ENCODE measurements at regions of chr15 and their contacts with region 1.

Region 1: DNA sequence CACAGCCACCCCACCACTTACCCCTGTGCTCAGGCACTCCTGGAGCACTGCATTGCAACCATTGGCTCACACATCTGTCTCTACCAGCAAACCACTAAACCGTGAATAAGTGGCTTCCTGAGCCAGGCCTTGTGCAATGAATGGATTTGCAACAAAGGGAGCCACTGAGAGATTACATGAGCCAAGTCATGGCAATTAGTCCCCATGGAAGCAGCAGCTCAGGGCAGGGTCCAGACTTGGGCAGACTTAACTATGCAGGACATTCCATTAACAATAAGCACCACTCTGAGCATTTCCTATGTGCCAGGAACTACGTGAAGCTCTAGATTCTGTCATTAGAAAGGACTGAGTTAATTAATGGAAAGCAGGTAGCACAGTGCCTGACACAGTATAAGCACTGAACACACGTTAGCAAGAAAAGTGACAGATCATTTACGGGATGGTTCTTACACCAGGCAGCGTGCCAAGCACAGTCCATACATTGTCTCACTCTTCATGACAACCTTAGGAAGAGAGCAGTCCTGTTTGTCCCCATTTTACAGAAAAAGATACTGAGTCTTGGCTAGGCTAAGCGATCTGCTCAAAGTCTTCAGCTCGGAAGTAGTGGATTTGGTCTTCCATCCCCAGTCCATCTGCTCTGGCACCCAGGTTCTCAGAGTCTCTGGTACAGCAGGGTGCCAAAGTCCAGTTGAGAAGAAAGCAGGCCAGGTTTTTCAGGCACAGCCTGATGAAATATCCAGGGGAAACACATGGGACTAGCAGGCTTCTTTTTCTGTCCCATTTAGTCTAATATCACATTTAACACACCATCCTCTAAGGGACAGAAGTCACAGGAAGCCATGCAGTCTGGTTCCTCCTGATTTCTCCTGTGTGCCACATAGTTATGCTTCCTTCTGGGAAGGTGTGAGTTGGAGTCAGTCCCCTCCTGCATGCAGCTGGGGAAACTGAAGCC is 44.1 kb downstream of the LIPC start:
- DNase-seq: no peak
- ATAC-seq: peak; percentile 35
- H3K4me3 Mint-ChIP-seq: peak overlapping the region; percentile 76
- H3K27ac Mint-ChIP-seq: peak overlapping the region; percentile 94
- H3K4me1 Mint-ChIP-seq: peaks cover 68% of the 10 kb centered on the region
- H3K27me3 Mint-ChIP-seq: no peaks in the 10 kb centered on the region

Region 2: GRCh38 chr15:58269455-58270414 is 206.1 kb before region 1 on chr15:
- POLR2A ChIA-PET with region 1: interaction called, 20 read pairs
- DNase-seq: peak; percentile 41
- ATAC-seq: peak; percentile 90
- H3K4me3 Mint-ChIP-seq: no peak overlapping the region
- H3K27ac Mint-ChIP-seq: peak overlapping the region; percentile 79
- H3K4me1 Mint-ChIP-seq: peaks cover 10% of the 10 kb centered on the region
- H3K27me3 Mint-ChIP-seq: peaks cover 3% of the 10 kb centered on the region

Region 3: DNA sequence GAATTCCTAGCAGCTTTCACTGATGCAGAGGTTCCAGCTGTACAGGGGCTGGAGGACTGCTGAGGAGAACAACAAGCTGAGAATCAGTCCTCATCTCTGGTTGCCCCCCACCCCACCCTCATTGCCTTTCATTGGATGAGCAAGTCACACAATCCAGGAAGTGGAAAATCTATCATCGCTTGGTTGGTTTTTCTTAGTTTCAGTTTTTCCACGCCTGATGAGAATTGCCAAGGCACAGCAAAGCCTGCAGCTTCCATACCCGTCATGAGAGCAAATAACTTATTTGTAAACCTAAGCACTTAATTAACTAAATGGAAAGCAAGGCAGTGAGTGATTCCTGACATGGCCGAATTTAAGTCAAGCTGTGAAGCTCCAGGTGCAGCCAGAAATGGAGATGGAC is 65.5 kb before region 1 on chr15:
- POLR2A ChIA-PET with region 1: interaction called, 18 read pairs
- DNase-seq: peak; percentile 39
- ATAC-seq: peak; percentile 76
- H3K4me3 Mint-ChIP-seq: peak overlapping the region; percentile 89
- H3K27ac Mint-ChIP-seq: peak overlapping the region; percentile 88
- H3K4me1 Mint-ChIP-seq: peaks cover 20% of the 10 kb centered on the region
- H3K27me3 Mint-ChIP-seq: no peaks in the 10 kb centered on the region

Region 4: DNA sequence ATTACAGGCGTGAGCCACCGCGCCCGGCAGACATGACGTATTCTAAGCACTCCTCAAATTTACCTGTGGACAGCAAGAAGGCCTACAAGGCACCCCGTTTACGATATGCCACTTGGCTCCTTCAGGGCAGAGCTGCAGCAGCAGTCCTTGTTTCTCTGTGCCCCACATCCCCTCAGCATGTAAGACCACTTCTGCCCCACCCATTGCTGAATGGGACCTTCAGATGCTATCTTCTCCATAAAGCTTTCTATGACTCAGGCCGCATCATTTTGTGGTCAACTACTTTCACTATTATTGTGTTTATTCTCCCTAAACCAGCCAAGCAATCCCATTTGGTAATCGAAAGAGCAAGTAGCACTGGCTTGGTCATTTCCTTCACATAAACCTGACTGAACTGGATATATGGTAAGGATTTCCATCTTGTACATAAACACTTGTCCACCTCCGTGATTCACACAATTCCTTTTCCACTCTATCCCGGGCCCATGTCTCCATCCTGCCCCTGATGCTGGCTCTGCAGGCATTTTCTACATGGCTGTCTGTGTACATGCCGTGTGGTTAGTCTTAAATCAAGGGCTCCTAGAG is 18.4 kb before region 1 on chr15:
- POLR2A ChIA-PET with region 1: interaction called, 51 read pairs
- DNase-seq: no peak
- ATAC-seq: peak; percentile 49
- H3K4me3 Mint-ChIP-seq: peak overlapping the region; percentile 28
- H3K27ac Mint-ChIP-seq: peak overlapping the region; percentile 89
- H3K4me1 Mint-ChIP-seq: peaks cover 67% of the 10 kb centered on the region
- H3K27me3 Mint-ChIP-seq: no peaks in the 10 kb centered on the region

Region 5: DNA sequence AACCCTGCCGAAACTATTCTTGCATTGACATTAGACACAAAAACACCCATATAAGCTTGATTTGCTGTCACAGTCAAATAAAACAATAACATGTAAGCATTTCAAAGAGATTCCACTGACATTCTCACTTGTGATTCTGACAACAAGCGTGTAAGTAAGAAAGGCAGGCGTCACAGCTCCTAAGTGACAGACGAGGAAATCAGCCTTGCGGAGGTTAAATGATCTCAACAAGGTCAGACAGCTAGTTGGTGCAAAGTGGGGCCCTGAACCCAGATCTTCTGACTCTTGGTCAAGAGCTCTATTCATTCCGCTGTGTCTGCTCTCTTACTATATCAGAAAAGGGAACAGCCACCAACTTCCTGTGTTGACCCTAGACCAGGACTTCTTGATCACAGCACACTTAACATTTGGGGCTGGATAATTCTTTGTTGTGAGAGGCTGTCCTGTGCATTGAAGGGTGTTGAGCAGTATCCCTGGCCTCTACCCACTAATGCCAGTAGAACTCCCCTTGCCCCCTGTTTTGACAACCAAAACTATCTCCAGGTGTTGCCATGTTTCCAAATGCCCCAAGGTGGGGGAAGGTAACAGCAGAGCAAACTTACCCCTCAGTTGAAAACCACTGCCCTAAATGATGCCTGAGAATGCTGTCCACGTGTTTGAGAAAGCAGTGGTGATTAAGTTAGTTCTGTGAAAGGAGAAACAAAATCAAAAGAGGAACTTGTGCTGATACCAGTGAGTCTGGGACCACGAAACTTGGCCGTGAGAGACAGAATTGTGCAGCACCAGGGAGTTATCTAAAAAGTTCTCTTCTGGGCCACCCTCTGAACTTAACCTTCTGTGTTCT is 42.1 kb after region 1 on chr15:
- POLR2A ChIA-PET with region 1: interaction called, 34 read pairs
- DNase-seq: no peak
- ATAC-seq: peak; percentile 30
- H3K4me3 Mint-ChIP-seq: peak overlapping the region; percentile 59
- H3K27ac Mint-ChIP-seq: peak overlapping the region; percentile 90
- H3K4me1 Mint-ChIP-seq: peaks cover 64% of the 10 kb centered on the region
- H3K27me3 Mint-ChIP-seq: no peaks in the 10 kb centered on the region

Region 6: GRCh38 chr15:58546635-58547627 is 71.1 kb after region 1 on chr15:
- POLR2A ChIA-PET with region 1: interaction called, 11 read pairs
- DNase-seq: no peak
- ATAC-seq: no peak
- H3K4me3 Mint-ChIP-seq: peak overlapping the region; percentile 20
- H3K27ac Mint-ChIP-seq: peak overlapping the region; percentile 98
- H3K4me1 Mint-ChIP-seq: peaks cover 46% of the 10 kb centered on the region
- H3K27me3 Mint-ChIP-seq: no peaks in the 10 kb centered on the region

Region 7: DNA sequence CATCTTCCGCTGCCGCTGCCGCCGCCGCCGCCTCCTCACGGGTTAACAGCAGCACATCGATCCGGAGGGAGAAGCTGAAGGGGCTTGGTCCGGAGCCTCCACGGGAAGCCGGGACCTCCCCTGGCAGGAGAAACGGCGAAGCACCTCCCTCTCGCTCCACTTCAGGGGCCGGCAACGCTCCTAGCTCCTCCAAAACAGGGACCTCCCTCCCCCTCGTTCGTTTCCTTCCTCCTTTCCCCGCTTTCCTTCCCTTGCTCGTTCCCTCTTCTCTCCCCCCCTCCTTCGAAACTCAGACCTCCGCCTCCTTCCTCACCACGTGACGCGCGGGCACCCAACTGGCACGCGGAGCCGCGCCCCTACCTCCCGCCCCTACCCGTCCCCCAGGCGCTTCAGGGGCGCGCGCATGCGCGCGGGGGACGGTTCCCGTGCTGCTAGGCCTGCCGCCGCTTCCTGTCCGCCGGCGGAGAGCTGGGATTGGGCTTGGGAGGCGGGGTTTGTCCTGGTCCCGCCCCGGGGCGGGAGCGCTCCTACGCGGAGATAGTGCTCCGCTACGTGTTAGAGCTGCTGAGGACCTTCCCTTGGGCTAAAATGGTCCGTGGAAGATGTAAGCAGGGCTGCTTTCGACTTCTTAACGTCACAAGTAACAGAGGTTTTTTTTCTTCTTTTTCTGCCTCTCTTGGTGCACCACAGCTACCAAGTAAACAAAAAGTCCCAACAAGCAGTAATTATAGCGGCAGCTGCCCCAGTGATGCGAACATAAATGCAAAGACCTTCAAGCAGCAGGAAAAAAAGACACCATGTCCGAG is 273.9 kb after region 1 on chr15 and contains the start of gene ADAM10:
- POLR2A ChIA-PET with region 1: interaction called, 11 read pairs
- DNase-seq: peak; percentile 96
- ATAC-seq: peak; percentile 91
- H3K4me3 Mint-ChIP-seq: peak within 1 kb of the TSS; percentile 98
- H3K27ac Mint-ChIP-seq: peak within 1 kb of the TSS; percentile 97
- H3K4me1 Mint-ChIP-seq: peaks cover 25% of the 10 kb centered on the region
- H3K27me3 Mint-ChIP-seq: no peaks in the 10 kb centered on the region
- total RNA-seq, gene ADAM10: 173 to 175 TPM